Naive thymus-derived CD4-positive, alpha-beta T cell (primary cell): ENCODE measurements at regions of chr16 and their contacts with region 1.

Region 1: DNA sequence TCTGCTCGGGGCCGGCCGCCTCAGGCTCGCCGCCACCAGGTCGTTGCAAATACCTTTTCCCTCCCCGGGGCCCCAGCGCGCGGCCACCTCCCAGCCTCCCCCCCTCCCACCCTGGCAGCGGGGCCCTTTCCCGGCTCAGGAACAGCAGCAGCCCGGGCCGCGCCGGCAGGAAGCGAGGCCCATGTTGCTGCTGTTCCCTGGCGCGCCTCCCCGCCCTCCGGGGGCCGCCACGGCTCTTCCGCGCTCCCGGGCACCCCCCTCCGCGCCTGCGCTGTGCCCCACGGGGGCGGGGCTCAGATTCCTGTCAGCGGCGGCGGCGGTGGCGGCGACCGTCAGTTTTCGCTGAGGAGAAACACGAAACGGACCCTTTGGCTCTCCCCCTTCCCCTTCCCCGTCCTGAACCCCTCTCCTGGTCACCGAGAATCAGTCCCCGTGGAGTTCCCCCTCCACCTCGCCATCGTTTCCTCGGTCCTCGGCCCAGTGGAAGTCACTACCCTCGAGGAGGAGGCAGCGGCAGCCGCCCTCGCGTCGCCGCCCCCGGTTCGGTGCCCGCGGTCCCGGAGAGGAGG is at the start of gene NFAT5:
- DNase-seq: peak; percentile 78 to 100 (median 96)
- ATAC-seq: peak; percentile 93
- H3K4me3 ChIP-seq: peak within 1 kb of the TSS; percentile 90
- H3K4me3 Mint-ChIP-seq: peak within 1 kb of the TSS; percentile 91 to 100 (median 97)
- H3K27ac ChIP-seq: peak within 1 kb of the TSS; percentile 97
- H3K27ac Mint-ChIP-seq: peak within 1 kb of the TSS; percentile 94 to 98 (median 96)
- H3K4me1 ChIP-seq: peaks cover 13 to 33% of the 10 kb centered on the region in 2 donors
- H3K4me1 Mint-ChIP-seq: peaks cover 39 to 59% (median 48%) of the 10 kb centered on the region in 7 donors
- H3K27me3 ChIP-seq: no peaks in the 10 kb centered on the region
- H3K27me3 Mint-ChIP-seq: no peaks in the 10 kb centered on the region
- total RNA-seq, gene NFAT5: 27.3 to 35.5 (median 34.2) TPM

Region 2: DNA sequence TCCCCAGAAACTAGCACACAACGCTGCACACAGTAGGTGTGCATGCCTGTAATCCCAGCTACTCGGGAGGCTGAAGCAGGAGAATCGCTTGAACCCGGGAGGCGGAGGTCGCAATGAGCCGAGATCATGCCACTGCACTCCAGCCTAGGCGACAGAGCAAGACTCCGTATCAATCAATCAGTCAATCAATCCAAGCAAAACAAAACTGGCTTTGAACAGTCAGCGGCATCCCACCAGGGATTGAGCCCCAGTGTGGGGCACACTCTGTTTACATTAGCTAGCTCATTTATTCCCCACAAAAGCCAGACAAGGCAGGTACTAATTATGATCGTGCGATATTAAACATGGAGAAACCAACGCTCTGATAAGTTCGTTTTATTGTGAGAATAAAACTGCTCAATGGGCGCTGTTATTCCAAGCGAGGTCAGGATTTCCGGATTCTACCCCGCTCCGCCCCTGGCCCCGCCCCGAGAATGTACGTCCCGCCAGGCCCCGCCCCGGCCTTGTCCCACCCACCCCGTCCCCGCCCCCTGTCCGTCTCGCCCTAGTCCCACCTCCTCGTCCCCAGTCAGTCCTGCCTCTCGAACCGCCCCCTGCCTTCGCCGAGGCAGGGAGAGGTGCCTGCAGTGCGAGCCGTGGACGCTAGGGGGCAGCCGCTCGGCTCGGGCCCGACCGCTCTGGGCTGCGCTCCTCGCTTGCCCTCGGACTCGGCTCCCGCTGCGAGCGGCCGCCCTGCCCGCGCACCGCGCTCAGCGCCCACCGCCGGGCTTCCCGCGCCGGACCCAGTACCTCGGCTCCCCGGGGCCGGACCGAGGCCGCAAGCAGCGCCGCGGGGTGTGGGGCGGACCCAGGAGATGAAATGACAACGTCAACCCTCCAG is 254.9 kb before region 1 on chr16 and contains the start of gene VPS4A:
- CTCF ChIA-PET with region 1: no interaction called
- POLR2A ChIA-PET with region 1: no interaction called
- intact Hi-C with region 1: loop called in 1 of 2 experiments (anchors 1 kb)
- DNase-seq: peak; percentile 95 to 99 (median 97)
- ATAC-seq: peak; percentile 99
- H3K4me3 ChIP-seq: peak within 1 kb of the TSS; percentile 74
- H3K4me3 Mint-ChIP-seq: peak within 1 kb of the TSS; percentile 90 to 100 (median 99)
- H3K27ac ChIP-seq: peak within 1 kb of the TSS; percentile 94
- H3K27ac Mint-ChIP-seq: peak within 1 kb of the TSS; percentile 92 to 99 (median 95)
- H3K4me1 ChIP-seq: peaks cover 8 to 10% of the 10 kb centered on the region in 2 donors
- H3K4me1 Mint-ChIP-seq: peaks cover 17 to 36% (median 29%) of the 10 kb centered on the region in 7 donors
- H3K27me3 ChIP-seq: no peaks in the 10 kb centered on the region
- H3K27me3 Mint-ChIP-seq: no peaks in the 10 kb centered on the region
- total RNA-seq, gene VPS4A: 36.7 to 53.7 (median 46.9) TPM

Region 3: DNA sequence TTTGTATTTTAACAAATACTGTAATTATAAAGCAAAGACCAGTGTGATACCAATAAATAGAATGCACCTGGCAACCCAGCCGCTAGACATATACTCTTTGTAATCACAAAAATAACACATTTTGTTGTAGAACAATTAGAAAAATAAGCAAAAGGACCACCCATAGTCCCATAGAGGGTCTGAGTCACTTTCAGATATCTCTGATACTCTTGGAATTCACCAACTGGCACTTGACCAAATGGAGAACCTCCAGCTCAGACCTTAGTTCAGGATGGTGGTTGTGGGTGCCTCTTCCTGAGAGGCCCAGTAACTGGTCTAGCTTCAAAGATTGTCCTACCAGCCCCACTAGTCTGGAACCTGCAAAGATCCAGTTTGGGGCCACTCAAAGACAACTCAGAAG is 179.2 kb before region 1 on chr16:
- CTCF ChIA-PET with region 1: no interaction called
- POLR2A ChIA-PET with region 1: no interaction called
- intact Hi-C with region 1: loop called in 1 of 2 experiments (anchors 2 kb)
- DNase-seq: no peak
- ATAC-seq: no peak
- H3K4me3 ChIP-seq: no peak overlapping the region
- H3K4me3 Mint-ChIP-seq: peak overlapping the region in 8 of 10 donors; percentile 86 to 96 (median 92)
- H3K27ac ChIP-seq: peak overlapping the region; percentile 95
- H3K27ac Mint-ChIP-seq: peak overlapping the region in 6 of 9 donors; percentile 90 to 99 (median 95)
- H3K4me1 ChIP-seq: peaks cover 10 to 27% of the 10 kb centered on the region in 2 donors
- H3K4me1 Mint-ChIP-seq: peaks cover 22 to 37% (median 35%) of the 10 kb centered on the region in 7 donors
- H3K27me3 ChIP-seq: no peaks in the 10 kb centered on the region
- H3K27me3 Mint-ChIP-seq: no peaks in the 10 kb centered on the region

Region 4: GRCh38 chr16:69424053-69424934 is 141.5 kb before region 1 on chr16 and contains the start of gene CYB5B:
- CTCF ChIA-PET with region 1: no interaction called
- POLR2A ChIA-PET with region 1: interaction called, 6 read pairs
- intact Hi-C with region 1: loop called (anchors 1 kb)
- DNase-seq: peak; percentile 72 to 98 (median 96)
- ATAC-seq: peak; percentile 98
- H3K4me3 ChIP-seq: peak within 1 kb of the TSS; percentile 84
- H3K4me3 Mint-ChIP-seq: peak within 1 kb of the TSS; percentile 92 to 99 (median 97)
- H3K27ac ChIP-seq: peak within 1 kb of the TSS; percentile 83
- H3K27ac Mint-ChIP-seq: peak within 1 kb of the TSS; percentile 89 to 98 (median 93)
- H3K4me1 ChIP-seq: peaks cover 0 to 13% of the 10 kb centered on the region in 2 donors
- H3K4me1 Mint-ChIP-seq: peaks cover 12 to 49% (median 37%) of the 10 kb centered on the region in 7 donors
- H3K27me3 ChIP-seq: no peaks in the 10 kb centered on the region
- H3K27me3 Mint-ChIP-seq: no peaks in the 10 kb centered on the region
- total RNA-seq, gene CYB5B: 29.6 to 148 (median 48.2) TPM

Region 5: DNA sequence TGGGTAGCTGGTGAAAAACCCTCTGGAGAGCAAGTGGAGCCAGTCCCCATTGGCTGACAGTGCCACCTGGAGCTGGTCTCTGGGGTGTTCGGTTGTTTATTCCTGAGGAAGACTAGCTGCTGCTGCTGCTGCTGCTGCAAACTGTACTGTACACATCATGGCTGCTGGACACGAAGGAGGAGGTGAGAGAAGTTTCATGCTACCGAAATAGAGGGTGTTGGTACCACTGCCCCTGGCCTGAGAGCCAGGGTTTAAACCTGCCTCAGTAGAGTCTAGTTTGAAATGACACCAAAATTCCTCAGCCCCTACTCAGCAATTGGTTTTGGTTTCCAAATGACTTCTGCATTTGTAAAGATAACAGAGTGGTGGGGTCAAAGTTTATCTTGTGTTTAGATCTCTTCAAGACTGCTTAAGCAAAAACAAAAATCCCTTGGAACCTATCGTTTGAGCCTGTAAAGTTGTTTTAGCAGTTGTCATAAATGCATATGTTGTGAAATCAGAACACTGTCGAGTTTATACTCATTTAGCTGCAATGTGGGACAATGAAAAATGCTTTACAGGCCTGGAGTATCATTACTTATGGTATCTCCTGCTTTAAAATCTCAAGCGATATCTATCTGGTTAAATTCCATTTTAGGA is 100.6 kb before region 1 on chr16:
- CTCF ChIA-PET with region 1: no interaction called
- POLR2A ChIA-PET with region 1: interaction called, 4 read pairs
- intact Hi-C with region 1: loop called in 1 of 2 experiments (anchors 2 kb)
- DNase-seq: peak in 1 of 9 donors; percentile 8
- ATAC-seq: peak; percentile 46
- H3K4me3 ChIP-seq: no peak overlapping the region
- H3K4me3 Mint-ChIP-seq: peak overlapping the region in 1 of 10 donors; percentile 77
- H3K27ac ChIP-seq: no peak overlapping the region
- H3K27ac Mint-ChIP-seq: peak overlapping the region; percentile 43 to 90 (median 59)
- H3K4me1 ChIP-seq: peaks cover 0 to 3% of the 10 kb centered on the region in 2 donors
- H3K4me1 Mint-ChIP-seq: peaks cover 5 to 58% (median 28%) of the 10 kb centered on the region in 7 donors
- H3K27me3 ChIP-seq: no peaks in the 10 kb centered on the region
- H3K27me3 Mint-ChIP-seq: no peaks in the 10 kb centered on the region

Region 6: GRCh38 chr16:69754469-69755310 is 188.9 kb after region 1 on chr16 and contains the start of gene NOB1:
- CTCF ChIA-PET with region 1: no interaction called
- POLR2A ChIA-PET with region 1: no interaction called
- intact Hi-C with region 1: loop called in 1 of 2 experiments (anchors 2 kb)
- DNase-seq: peak; percentile 96 to 98 (median 97)
- ATAC-seq: peak; percentile 97
- H3K4me3 ChIP-seq: peak within 1 kb of the TSS; percentile 91
- H3K4me3 Mint-ChIP-seq: peak within 1 kb of the TSS; percentile 98 to 100 (median 100)
- H3K27ac ChIP-seq: peak within 1 kb of the TSS; percentile 89
- H3K27ac Mint-ChIP-seq: peak within 1 kb of the TSS; percentile 92 to 100 (median 98)
- H3K4me1 ChIP-seq: peaks cover 13 to 17% of the 10 kb centered on the region in 2 donors
- H3K4me1 Mint-ChIP-seq: peaks cover 23 to 36% (median 26%) of the 10 kb centered on the region in 7 donors
- H3K27me3 ChIP-seq: no peaks in the 10 kb centered on the region
- H3K27me3 Mint-ChIP-seq: peaks cover 0 to 7% (median 0%) of the 10 kb centered on the region in 5 donors
- total RNA-seq, gene NOB1: 24.1 to 72.8 (median 45.0) TPM